ENCODE measurements at regions of chr6 and their contacts with region 1.

Region 1: GRCh38 chr6:159633196-159633595 is 59.8 kb downstream of the SOD2 start:
- DNase-seq: peak; percentile 32
- ATAC-seq: peak; percentile 63; the same call in 1 of the 2 replicates
- H3K4me3 Mint-ChIP-seq: no peak overlapping the region
- H3K27ac Mint-ChIP-seq: no peak overlapping the region
- H3K4me1 Mint-ChIP-seq: peaks cover 10% of the 10 kb centered on the region
- H3K27me3 Mint-ChIP-seq: no peaks in the 10 kb centered on the region
- CTCF ChIP-seq: peak; percentile 41; the same call in 1 of the 2 replicates

Region 2: GRCh38 chr6:159174263-159174969 is 458.8 kb before region 1 on chr6:
- CTCF ChIA-PET with region 1: interaction called, 11 read pairs
- POLR2A ChIA-PET with region 1: no interaction called
- DNase-seq: peak; percentile 83
- ATAC-seq: peak; percentile 81
- H3K4me3 Mint-ChIP-seq: peak overlapping the region; percentile 31; the same call in 1 of the 2 replicates
- H3K27ac Mint-ChIP-seq: no peak overlapping the region
- H3K4me1 Mint-ChIP-seq: peaks cover 8% of the 10 kb centered on the region
- H3K27me3 Mint-ChIP-seq: peaks cover 52% of the 10 kb centered on the region
- CTCF ChIP-seq: peak; percentile 79; the same call in 1 of the 2 replicates

Region 3: DNA sequence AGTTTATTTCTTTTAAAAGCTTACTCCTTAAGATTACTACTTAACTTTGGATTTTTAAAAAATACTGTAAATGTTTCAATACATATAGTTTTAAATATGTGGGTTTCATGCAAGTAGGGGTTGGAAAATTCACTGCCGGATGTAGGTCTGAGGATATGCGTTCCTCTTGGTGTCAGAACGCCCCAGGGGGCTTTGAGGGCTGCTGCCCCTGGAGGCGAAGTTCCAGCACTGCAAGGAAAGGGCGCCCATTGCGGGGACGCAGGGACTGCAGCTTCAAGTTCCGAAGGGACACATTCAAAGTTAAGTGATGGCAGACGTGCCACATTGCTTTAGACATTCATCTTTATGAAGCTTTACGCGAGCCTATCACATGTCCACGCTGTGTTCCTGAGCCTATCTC is 93.0 kb before region 1 on chr6:
- CTCF ChIA-PET with region 1: interaction called, 14 read pairs
- POLR2A ChIA-PET with region 1: no interaction called
- DNase-seq: peak; percentile 82
- ATAC-seq: peak; percentile 93
- H3K4me3 Mint-ChIP-seq: no peak overlapping the region
- H3K27ac Mint-ChIP-seq: no peak overlapping the region
- H3K4me1 Mint-ChIP-seq: peaks cover 10% of the 10 kb centered on the region
- H3K27me3 Mint-ChIP-seq: peaks cover 12% of the 10 kb centered on the region
- CTCF ChIP-seq: peak; percentile 66

Region 4: GRCh38 chr6:159608961-159609651 is 24.1 kb before region 1 on chr6:
- CTCF ChIA-PET with region 1: interaction called, 17 read pairs
- POLR2A ChIA-PET with region 1: no interaction called
- DNase-seq: peak; percentile 70
- ATAC-seq: peak; percentile 96
- H3K4me3 Mint-ChIP-seq: no peak overlapping the region
- H3K27ac Mint-ChIP-seq: no peak overlapping the region
- H3K4me1 Mint-ChIP-seq: no peaks in the 10 kb centered on the region
- H3K27me3 Mint-ChIP-seq: no peaks in the 10 kb centered on the region
- CTCF ChIP-seq: peak; percentile 47; the same call in 1 of the 2 replicates

Region 5: GRCh38 chr6:159654483-159655098 is 21.4 kb after region 1 on chr6:
- CTCF ChIA-PET with region 1: interaction called, 33 read pairs
- POLR2A ChIA-PET with region 1: no interaction called
- DNase-seq: no peak
- ATAC-seq: peak; percentile 32; the same call in 1 of the 2 replicates
- H3K4me3 Mint-ChIP-seq: no peak overlapping the region
- H3K27ac Mint-ChIP-seq: no peak overlapping the region
- H3K4me1 Mint-ChIP-seq: peaks cover 18% of the 10 kb centered on the region
- H3K27me3 Mint-ChIP-seq: no peaks in the 10 kb centered on the region
- CTCF ChIP-seq: peak; percentile 55

Region 6: DNA sequence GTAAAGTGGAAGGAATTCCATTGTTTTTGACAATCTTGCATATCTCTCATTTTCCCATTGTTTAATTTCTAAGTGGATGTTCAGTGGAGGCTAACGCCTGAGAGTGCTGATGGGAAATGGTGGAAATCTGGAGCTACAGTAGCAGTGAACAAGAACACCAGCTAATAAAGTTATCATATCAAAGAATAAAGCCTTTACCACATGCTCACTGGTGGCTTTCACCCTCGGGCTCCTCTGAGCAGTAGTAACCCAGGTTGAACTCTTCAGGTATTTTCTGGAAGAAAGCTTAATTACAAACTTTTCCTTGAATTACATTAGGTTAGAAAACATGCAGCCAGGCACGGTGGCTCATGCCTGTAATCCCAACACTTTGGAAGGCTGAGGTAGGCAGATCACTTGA is 118.3 kb after region 1 on chr6:
- CTCF ChIA-PET with region 1: no interaction called
- POLR2A ChIA-PET with region 1: no interaction called
- DNase-seq: no peak
- ATAC-seq: no peak
- H3K4me3 Mint-ChIP-seq: no peak overlapping the region
- H3K27ac Mint-ChIP-seq: no peak overlapping the region
- H3K4me1 Mint-ChIP-seq: no peaks in the 10 kb centered on the region
- H3K27me3 Mint-ChIP-seq: no peaks in the 10 kb centered on the region
- CTCF ChIP-seq: no peak

Region 7: GRCh38 chr6:159762681-159763293 is 129.6 kb after region 1 on chr6:
- CTCF ChIA-PET with region 1: no interaction called
- POLR2A ChIA-PET with region 1: no interaction called
- DNase-seq: no peak
- ATAC-seq: no peak
- H3K4me3 Mint-ChIP-seq: peak overlapping the region; percentile 81
- H3K27ac Mint-ChIP-seq: peak overlapping the region; percentile 97
- H3K4me1 Mint-ChIP-seq: peaks cover 34% of the 10 kb centered on the region
- H3K27me3 Mint-ChIP-seq: no peaks in the 10 kb centered on the region; the same call in 1 of the 2 replicates
- CTCF ChIP-seq: no peak

Region 8: GRCh38 chr6:160088069-160088783 is 455.0 kb after region 1 on chr6:
- CTCF ChIA-PET with region 1: no interaction called
- POLR2A ChIA-PET with region 1: no interaction called
- DNase-seq: peak; percentile 63
- ATAC-seq: peak; percentile 86
- H3K4me3 Mint-ChIP-seq: no peak overlapping the region
- H3K27ac Mint-ChIP-seq: peak overlapping the region; percentile 14; the same call in 1 of the 2 replicates
- H3K4me1 Mint-ChIP-seq: no peaks in the 10 kb centered on the region
- H3K27me3 Mint-ChIP-seq: no peaks in the 10 kb centered on the region
- CTCF ChIP-seq: peak; percentile 27; the same call in 1 of the 2 replicates